ENCODE measurements at regions of chr17 and their contacts with region 1.

Region 1: GRCh38 chr17:72985881-72986720 is 106.4 kb downstream of the SLC39A11 start:
- DNase-seq: peak in 1 of 2 donors; percentile 33
- ATAC-seq: peak; percentile 74 to 86
- H3K4me3 ChIP-seq: no peak overlapping the region
- H3K27ac ChIP-seq: no peak overlapping the region
- H3K4me1 ChIP-seq: no peaks in the 10 kb centered on the region
- H3K27me3 ChIP-seq: no peaks in the 10 kb centered on the region
- CTCF ChIP-seq: peak; percentile 47 to 81 (median 68)
- POLR2A ChIP-seq: no peak

Region 2: GRCh38 chr17:72657467-72658317 is 328.4 kb before region 1 on chr17:
- in situ Hi-C with region 1: no loop called
- intact Hi-C with region 1: no loop called
- DNase-seq: no peak
- ATAC-seq: no peak
- H3K4me3 ChIP-seq: no peak overlapping the region
- H3K27ac ChIP-seq: no peak overlapping the region
- H3K4me1 ChIP-seq: no peaks in the 10 kb centered on the region
- H3K27me3 ChIP-seq: no peaks in the 10 kb centered on the region
- CTCF ChIP-seq: no peak
- POLR2A ChIP-seq: no peak

Region 3: DNA sequence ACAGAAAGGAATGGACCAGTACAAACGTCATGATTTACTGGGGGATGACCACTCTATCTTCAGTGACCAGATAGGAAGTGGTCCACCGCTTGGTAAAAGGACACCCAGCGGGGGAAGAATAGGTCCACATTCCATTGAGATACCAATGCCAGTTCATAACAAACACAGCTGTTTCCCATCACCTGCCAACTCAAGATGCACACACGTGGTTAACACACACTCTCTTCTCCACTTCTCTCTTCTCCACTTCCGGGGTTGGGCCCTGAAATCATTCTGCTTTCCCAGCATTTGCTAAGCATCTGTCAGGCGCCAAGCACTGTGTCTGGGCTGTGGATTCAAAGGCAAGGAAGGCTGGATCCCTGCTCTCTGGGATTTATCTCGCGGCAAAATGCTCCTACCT is 69.1 kb before region 1 on chr17:
- in situ Hi-C with region 1: no loop called
- intact Hi-C with region 1: no loop called
- DNase-seq: no peak
- ATAC-seq: no peak
- H3K4me3 ChIP-seq: no peak overlapping the region
- H3K27ac ChIP-seq: no peak overlapping the region
- H3K4me1 ChIP-seq: no peaks in the 10 kb centered on the region
- H3K27me3 ChIP-seq: no peaks in the 10 kb centered on the region
- CTCF ChIP-seq: no peak
- POLR2A ChIP-seq: no peak

Region 4: GRCh38 chr17:72974605-72975232 is 11.4 kb before region 1 on chr17:
- in situ Hi-C with region 1: no loop called
- intact Hi-C with region 1: no loop called
- DNase-seq: no peak
- ATAC-seq: no peak
- H3K4me3 ChIP-seq: no peak overlapping the region
- H3K27ac ChIP-seq: no peak overlapping the region
- H3K4me1 ChIP-seq: peaks cover 0 to 17% of the 10 kb centered on the region in 2 donors
- H3K27me3 ChIP-seq: no peaks in the 10 kb centered on the region
- CTCF ChIP-seq: no peak
- POLR2A ChIP-seq: no peak

Region 5: GRCh38 chr17:73017658-73018057 is 31.6 kb after region 1 on chr17:
- in situ Hi-C with region 1: no loop called
- intact Hi-C with region 1: no loop called
- DNase-seq: no peak
- ATAC-seq: no peak
- H3K4me3 ChIP-seq: no peak overlapping the region
- H3K27ac ChIP-seq: no peak overlapping the region
- H3K4me1 ChIP-seq: peaks cover 0 to 3% of the 10 kb centered on the region in 2 donors
- H3K27me3 ChIP-seq: no peaks in the 10 kb centered on the region
- CTCF ChIP-seq: no peak
- POLR2A ChIP-seq: no peak

Region 6: GRCh38 chr17:73142872-73143381 is 156.8 kb after region 1 on chr17:
- in situ Hi-C with region 1: loop called in 1 of 4 experiments (anchors 25 kb)
- intact Hi-C with region 1: no loop called
- DNase-seq: no peak
- ATAC-seq: peak in 1 of 2 donors; percentile 33
- H3K4me3 ChIP-seq: no peak overlapping the region
- H3K27ac ChIP-seq: no peak overlapping the region
- H3K4me1 ChIP-seq: no peaks in the 10 kb centered on the region
- H3K27me3 ChIP-seq: no peaks in the 10 kb centered on the region
- CTCF ChIP-seq: no peak
- POLR2A ChIP-seq: no peak

Measured in gastrocnemius medialis (tissue), 4 donors.